GM12878 (cell line): ENCODE measurements at regions of chr7 and their contacts with region 1.

Region 1: GRCh38 chr7:76302347-76303201 is at the start of gene HSPB1:
- DNase-seq: peak; percentile 60
- ATAC-seq: peak; percentile 84
- H3K4me3 ChIP-seq: peak within 1 kb of the TSS; percentile 95
- H3K27ac ChIP-seq: peak within 1 kb of the TSS; percentile 54; the same call in 1 of the 2 replicates
- H3K4me1 ChIP-seq: peaks cover 3% of the 10 kb centered on the region
- H3K27me3 ChIP-seq: no peaks in the 10 kb centered on the region
- CTCF ChIP-seq: no peak
- EP300 ChIP-seq: peak in 1 of 2 experiments; percentile 33; a peak in 1 of 4 replicates
- POLR2A ChIP-seq: peak; percentile 95
- RAD21 ChIP-seq: no peak
- polyA plus RNA-seq, gene HSPB1: 13.7 to 56.5 TPM

Region 2: GRCh38 chr7:76291343-76292212 is 11.0 kb before region 1 on chr7:
- CTCF ChIA-PET with region 1: interaction called, 18 read pairs
- POLR2A ChIA-PET with region 1: interaction called, 4 read pairs
- RAD21 ChIA-PET with region 1: interaction called, 11 read pairs
- SMC1A ChIA-PET with region 1: interaction called, 8 read pairs
- in situ Hi-C with region 1: no loop called
- intact Hi-C with region 1: no loop called
- DNase-seq: peak; percentile 77
- ATAC-seq: peak; percentile 93
- H3K4me3 ChIP-seq: no peak overlapping the region
- H3K27ac ChIP-seq: peak overlapping the region; percentile 13
- H3K4me1 ChIP-seq: peaks cover 6% of the 10 kb centered on the region
- H3K27me3 ChIP-seq: no peaks in the 10 kb centered on the region
- CTCF ChIP-seq: peak; percentile 95 to 98 (median 98); a peak in 5 of 6 replicates
- EP300 ChIP-seq: 0 out of 4 replicates have a peak, but pooled peaks of 1 of the 2 experiments have one; percentile 16
- POLR2A ChIP-seq: no peak
- RAD21 ChIP-seq: peak; percentile 81